Naive thymus-derived CD8-positive, alpha-beta T cell (primary cell): ENCODE measurements at regions of chr10 and their contacts with region 1.

Region 1: GRCh38 chr10:119207367-119207668 is at the start of gene GRK5:
- DNase-seq: peak; percentile 87 to 98 (median 97)
- ATAC-seq: peak; percentile 77 to 82
- H3K4me3 Mint-ChIP-seq: peak within 1 kb of the TSS; percentile 88 to 99 (median 96)
- H3K27ac Mint-ChIP-seq: peak within 1 kb of the TSS; percentile 92 to 98 (median 95)
- H3K4me1 Mint-ChIP-seq: peaks cover 26 to 48% (median 43%) of the 10 kb centered on the region in 4 donors
- H3K27me3 Mint-ChIP-seq: no peaks in the 10 kb centered on the region
- polyA plus RNA-seq, gene GRK5: 4.4 to 11.0 (median 10.0) TPM

Region 2: DNA sequence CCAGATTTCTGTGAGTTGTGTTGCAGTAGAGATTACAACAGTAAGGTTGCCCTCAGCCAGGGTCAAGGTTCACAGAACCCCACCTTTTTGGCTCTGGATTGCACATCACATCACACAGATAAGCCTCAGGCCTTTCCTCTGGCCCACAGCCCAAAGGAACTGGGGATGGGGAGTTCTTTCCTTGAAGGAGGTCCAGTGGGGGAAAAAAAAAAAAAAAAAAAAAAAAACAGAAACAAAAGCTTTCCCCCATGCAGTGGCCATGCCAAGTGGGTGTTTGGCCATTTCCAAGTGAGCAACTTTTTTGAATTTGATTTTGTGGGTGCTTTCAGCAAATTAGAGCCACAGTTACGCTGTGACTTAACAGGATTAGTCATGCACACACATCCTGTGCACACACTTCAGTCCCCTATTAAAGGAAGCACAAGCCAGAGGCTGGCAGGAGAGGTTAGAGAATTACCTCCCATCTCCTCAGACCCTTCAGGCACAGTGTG is 257.1 kb before region 1 on chr10:
- POLR2A ChIA-PET with region 1: no interaction called
- DNase-seq: no peak
- ATAC-seq: no peak
- H3K4me3 Mint-ChIP-seq: no peak overlapping the region
- H3K27ac Mint-ChIP-seq: no peak overlapping the region
- H3K4me1 Mint-ChIP-seq: peaks cover 0 to 3% (median 0%) of the 10 kb centered on the region in 4 donors
- H3K27me3 Mint-ChIP-seq: peaks cover 4 to 42% (median 13%) of the 10 kb centered on the region in 5 donors

Region 3: DNA sequence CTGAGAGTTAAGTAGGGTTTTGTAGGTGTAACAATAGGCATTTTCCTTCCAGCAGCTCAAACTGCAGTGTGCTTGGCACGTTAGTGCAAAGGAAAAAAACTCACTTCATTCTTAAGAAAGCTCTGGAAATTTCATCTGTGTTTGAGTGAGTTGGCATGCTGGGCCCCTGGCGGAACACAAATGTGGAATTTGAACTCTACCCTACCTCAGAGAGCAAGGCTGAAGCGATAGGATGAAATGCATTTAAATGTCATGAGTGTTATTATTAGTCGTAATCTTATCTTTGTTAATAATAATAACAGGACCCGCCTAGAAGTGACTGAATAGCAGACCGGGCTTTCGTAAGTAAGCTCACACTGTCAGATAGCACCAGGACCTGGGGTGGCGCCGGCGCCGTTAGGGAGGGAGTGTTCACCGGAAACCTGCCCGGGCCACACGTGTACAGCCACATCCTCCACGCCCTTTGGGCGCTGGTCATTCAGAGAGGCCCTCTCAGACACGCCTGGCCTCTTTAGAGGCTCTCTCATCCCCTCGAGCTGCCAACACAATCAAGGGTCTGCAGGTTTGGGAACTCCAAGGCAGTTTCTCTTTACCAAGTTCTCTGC is 63.5 kb after region 1 on chr10:
- POLR2A ChIA-PET with region 1: interaction called, 22 read pairs
- DNase-seq: peak in 2 of 10 donors; percentile 19 to 48
- ATAC-seq: peak in 1 of 2 donors; percentile 11
- H3K4me3 Mint-ChIP-seq: peak overlapping the region; percentile 43 to 76 (median 66)
- H3K27ac Mint-ChIP-seq: peak overlapping the region; percentile 83 to 100 (median 99)
- H3K4me1 Mint-ChIP-seq: peaks cover 23 to 87% (median 63%) of the 10 kb centered on the region in 4 donors
- H3K27me3 Mint-ChIP-seq: no peaks in the 10 kb centered on the region

Region 4: DNA sequence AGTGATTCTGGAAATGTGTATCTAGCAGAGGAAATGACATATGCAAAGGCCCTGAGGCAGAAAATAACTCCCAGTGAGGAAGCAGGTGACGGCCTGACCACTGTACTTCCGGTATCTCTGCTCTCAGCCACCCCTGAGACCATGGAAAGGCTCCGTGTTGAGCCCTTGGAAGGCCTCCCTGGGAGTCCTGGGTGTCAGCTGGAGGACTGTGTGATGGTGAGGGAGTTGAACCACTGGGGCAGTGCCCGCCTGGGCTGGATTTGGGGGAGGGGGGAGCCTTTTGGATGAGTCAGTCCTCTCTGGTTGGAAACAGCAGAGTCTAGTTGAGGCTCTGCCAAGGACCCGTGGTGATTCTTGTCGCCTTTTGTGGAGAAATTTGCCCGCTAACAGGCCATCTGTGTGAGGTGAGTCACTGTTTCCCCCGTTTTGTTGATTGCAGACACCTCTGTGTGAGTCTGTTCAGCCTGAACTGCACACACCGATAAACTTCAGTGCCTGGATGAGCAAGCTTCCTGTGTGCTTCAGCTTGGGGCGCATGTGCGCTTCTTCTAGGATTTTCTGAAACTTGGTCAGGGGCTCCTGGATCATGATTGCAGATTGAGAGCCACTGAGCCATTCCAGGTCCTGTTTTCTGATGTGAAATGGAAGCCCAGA is 98.7 kb after region 1 on chr10:
- POLR2A ChIA-PET with region 1: interaction called, 61 read pairs
- DNase-seq: peak; percentile 41 to 92 (median 72)
- ATAC-seq: peak; percentile 79 to 83
- H3K4me3 Mint-ChIP-seq: peak overlapping the region; percentile 83 to 96 (median 90)
- H3K27ac Mint-ChIP-seq: peak overlapping the region; percentile 84 to 99 (median 98)
- H3K4me1 Mint-ChIP-seq: peaks cover 35 to 93% (median 67%) of the 10 kb centered on the region in 4 donors
- H3K27me3 Mint-ChIP-seq: peaks cover 0 to 12% (median 2%) of the 10 kb centered on the region in 5 donors

Region 5: DNA sequence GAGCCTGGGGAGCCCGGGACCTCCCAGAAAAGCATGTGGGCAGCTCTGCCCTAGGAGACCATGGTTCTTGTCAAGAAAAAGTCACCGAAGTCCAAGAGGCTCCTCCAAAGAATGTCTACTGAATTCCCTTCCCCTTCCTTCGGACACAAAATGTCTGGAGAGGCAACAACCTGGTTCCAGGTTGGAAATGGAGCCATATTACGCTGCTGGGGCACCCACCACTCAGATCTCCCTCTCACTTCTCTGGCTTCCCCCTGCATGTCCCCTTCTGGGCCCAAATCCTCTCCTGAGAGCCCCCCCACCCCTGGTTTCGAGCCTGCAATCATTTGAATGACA is 282.6 kb after region 1 on chr10:
- POLR2A ChIA-PET with region 1: interaction called, 13 read pairs
- DNase-seq: no peak
- ATAC-seq: no peak
- H3K4me3 Mint-ChIP-seq: peak overlapping the region; percentile 75 to 94 (median 88)
- H3K27ac Mint-ChIP-seq: peak overlapping the region; percentile 75 to 99 (median 96)
- H3K4me1 Mint-ChIP-seq: peaks cover 21 to 61% (median 55%) of the 10 kb centered on the region in 4 donors
- H3K27me3 Mint-ChIP-seq: no peaks in the 10 kb centered on the region